ENCODE measurements at regions of chr14 and their contacts with region 1.

Region 1: GRCh38 chr14:21092273-21093011 is 6.0 kb downstream of the ZNF219 start:
- DNase-seq: peak; percentile 81 to 95 (median 90)
- H3K4me3 ChIP-seq: no peak overlapping the region
- H3K27ac ChIP-seq: peak overlapping the region in 3 of 5 donors; percentile 24 to 79 (median 68)
- H3K4me1 ChIP-seq: peaks cover 13 to 39% of the 10 kb centered on the region in 2 donors
- H3K27me3 ChIP-seq: no peaks in the 10 kb centered on the region
- CTCF ChIP-seq: peak; percentile 99 to 100 (median 100)
- POLR2A ChIP-seq: peak in 1 of 2 donors; percentile 31

Region 2: GRCh38 chr14:21014761-21015190 is 77.7 kb before region 1 on chr14:
- intact Hi-C with region 1: loop called in 1 of 2 experiments (anchors 5 kb)
- DNase-seq: peak; percentile 84 to 96 (median 90)
- H3K4me3 ChIP-seq: no peak overlapping the region
- H3K27ac ChIP-seq: peak overlapping the region in 3 of 5 donors; percentile 3 to 51 (median 32)
- H3K4me1 ChIP-seq: peaks cover 9 to 15% of the 10 kb centered on the region in 2 donors
- H3K27me3 ChIP-seq: no peaks in the 10 kb centered on the region
- CTCF ChIP-seq: peak; percentile 96 to 99 (median 98)
- POLR2A ChIP-seq: no peak

Region 3: GRCh38 chr14:21024585-21025370 is 67.7 kb before region 1 on chr14 and contains the start of gene NDRG2:
- intact Hi-C with region 1: loop called (anchors 5 kb)
- DNase-seq: peak; percentile 79 to 91 (median 86)
- H3K4me3 ChIP-seq: peak within 1 kb of the TSS; percentile 64 to 71 (median 65)
- H3K27ac ChIP-seq: peak within 1 kb of the TSS; percentile 43 to 93 (median 68)
- H3K4me1 ChIP-seq: peaks cover 36 to 50% of the 10 kb centered on the region in 2 donors
- H3K27me3 ChIP-seq: no peaks in the 10 kb centered on the region
- CTCF ChIP-seq: no peak
- POLR2A ChIP-seq: peak; percentile 37 to 63
- total RNA-seq, gene NDRG2: 116 to 1,323 (median 677) TPM

Measured in adrenal gland (tissue), 19 donors.